ENCODE measurements at regions of chr3 and their contacts with region 1.

Region 1: GRCh38 chr3:165259518-165260193 is 63.5 kb upstream of the SLITRK3 start:
- DNase-seq: no peak
- ATAC-seq: peak; percentile 51; the same call in 1 of the 2 replicates
- H3K4me3 Mint-ChIP-seq: no peak overlapping the region
- H3K27ac Mint-ChIP-seq: 0 out of 2 replicates have a peak overlapping the region, but pooled peaks have one; percentile 28
- H3K4me1 Mint-ChIP-seq: peaks cover 7% of the 10 kb centered on the region
- H3K27me3 Mint-ChIP-seq: no peaks in the 10 kb centered on the region
- CTCF ChIP-seq: no peak

Region 2: DNA sequence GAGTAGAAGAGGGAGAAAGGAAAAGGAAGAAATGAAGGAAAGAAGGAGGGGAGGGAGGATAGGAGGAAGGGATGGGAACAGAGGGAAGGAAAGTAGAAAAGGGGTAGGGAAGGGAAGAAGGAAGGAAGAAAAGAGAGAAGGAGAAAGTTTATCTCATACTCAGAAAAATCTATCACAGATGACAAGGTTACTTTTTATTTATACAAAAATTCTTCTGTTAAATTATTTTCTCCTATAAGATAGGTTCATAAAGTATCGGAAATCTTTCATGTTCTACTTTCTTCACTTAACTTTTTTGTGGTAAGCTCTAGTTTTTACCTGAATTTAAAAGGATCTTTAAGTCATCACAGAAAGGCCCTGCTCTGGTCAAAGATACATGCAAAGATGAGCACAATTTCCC is 219.5 kb before region 1 on chr3:
- CTCF ChIA-PET with region 1: no interaction called
- POLR2A ChIA-PET with region 1: no interaction called
- DNase-seq: no peak
- ATAC-seq: no peak
- H3K4me3 Mint-ChIP-seq: no peak overlapping the region
- H3K27ac Mint-ChIP-seq: no peak overlapping the region
- H3K4me1 Mint-ChIP-seq: no peaks in the 10 kb centered on the region
- H3K27me3 Mint-ChIP-seq: no peaks in the 10 kb centered on the region
- CTCF ChIP-seq: no peak

Region 3: GRCh38 chr3:165206454-165207266 is 53.0 kb before region 1 on chr3:
- CTCF ChIA-PET with region 1: interaction called, 12 read pairs
- POLR2A ChIA-PET with region 1: no interaction called
- DNase-seq: peak; percentile 72
- ATAC-seq: peak; percentile 99
- H3K4me3 Mint-ChIP-seq: peak overlapping the region; percentile 65
- H3K27ac Mint-ChIP-seq: no peak overlapping the region
- H3K4me1 Mint-ChIP-seq: peaks cover 24% of the 10 kb centered on the region
- H3K27me3 Mint-ChIP-seq: peaks cover 9% of the 10 kb centered on the region
- CTCF ChIP-seq: peak; percentile 69